BJ (cell line): ENCODE measurements at regions of chrX and their contacts with region 1.

Region 1: GRCh38 chrX:47540754-47541538 is 20.1 kb upstream of the ARAF start:
- DNase-seq: peak; percentile 71
- H3K4me3 ChIP-seq: no peak overlapping the region
- H3K27me3 ChIP-seq: no peaks in the 10 kb centered on the region
- CTCF ChIP-seq: peak; percentile 65

Region 2: DNA sequence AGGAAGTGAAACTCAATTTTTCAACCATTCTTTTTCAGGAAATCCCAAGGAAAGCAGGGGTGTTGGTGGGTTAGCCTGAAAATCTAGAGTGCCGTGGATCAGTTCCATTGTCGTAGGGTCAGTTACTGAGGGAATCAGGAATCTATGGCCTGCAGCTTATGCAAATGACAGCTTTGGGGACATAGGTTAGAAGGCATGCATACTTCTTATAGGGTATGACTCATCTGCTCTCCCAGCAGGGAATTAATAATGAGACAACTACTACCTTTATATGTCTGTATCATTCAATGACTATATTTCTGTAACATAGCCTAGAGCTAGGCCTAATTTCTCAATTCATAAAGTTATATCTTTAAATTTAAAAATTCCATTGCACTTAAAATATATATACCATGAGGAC is 94.5 kb before region 1 on chrX:
- CTCF ChIA-PET with region 1: no interaction called
- POLR2A ChIA-PET with region 1: no interaction called
- DNase-seq: no peak
- H3K4me3 ChIP-seq: no peak overlapping the region
- H3K27me3 ChIP-seq: no peaks in the 10 kb centered on the region
- CTCF ChIP-seq: no peak

Region 3: DNA sequence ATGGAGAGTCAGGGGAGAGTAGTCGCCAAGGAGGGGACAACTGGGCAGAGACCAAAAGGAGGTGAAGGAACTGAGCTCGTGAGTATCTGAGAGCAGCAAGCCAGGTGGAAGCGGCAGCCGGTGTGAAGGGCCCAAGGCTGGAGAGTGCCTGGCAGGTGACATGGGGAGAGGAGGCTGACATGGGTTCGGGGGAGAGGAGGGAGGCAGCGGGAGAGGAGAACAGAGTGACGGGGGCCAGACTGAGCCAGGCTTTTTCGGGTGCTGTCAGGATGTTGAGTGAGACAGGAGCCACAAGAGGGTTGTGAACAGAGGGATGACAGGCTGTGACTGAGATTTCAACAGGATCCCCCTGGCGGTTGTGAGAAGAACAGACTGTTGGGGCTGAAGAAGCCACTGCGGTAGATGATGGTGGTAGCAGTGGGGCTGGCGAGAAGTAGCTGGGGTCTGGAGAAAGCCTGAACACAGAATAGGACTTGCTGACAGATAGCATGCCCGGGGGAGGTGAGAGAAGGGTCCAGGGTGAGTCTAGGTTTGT is 103.7 kb after region 1 on chrX:
- CTCF ChIA-PET with region 1: interaction called, 16 read pairs
- POLR2A ChIA-PET with region 1: no interaction called
- DNase-seq: no peak
- H3K4me3 ChIP-seq: no peak overlapping the region
- H3K27me3 ChIP-seq: no peaks in the 10 kb centered on the region
- CTCF ChIP-seq: peak; percentile 39; the same call in 1 of the 2 replicates